ENCODE measurements at regions of chr5 and their contacts with region 1.

Region 1: GRCh38 chr5:125412561-125413495 is 666.4 kb upstream of the ZNF608 start:
- DNase-seq: peak; percentile 58 to 74
- ATAC-seq: peak; percentile 91 to 96 (median 94)
- H3K4me3 ChIP-seq: peak overlapping the region; percentile 42
- H3K27ac ChIP-seq: peak overlapping the region; percentile 43
- H3K4me1 ChIP-seq: peaks cover 24% of the 10 kb centered on the region
- H3K27me3 ChIP-seq: no peaks in the 10 kb centered on the region
- CTCF ChIP-seq: peak; percentile 44

Region 2: DNA sequence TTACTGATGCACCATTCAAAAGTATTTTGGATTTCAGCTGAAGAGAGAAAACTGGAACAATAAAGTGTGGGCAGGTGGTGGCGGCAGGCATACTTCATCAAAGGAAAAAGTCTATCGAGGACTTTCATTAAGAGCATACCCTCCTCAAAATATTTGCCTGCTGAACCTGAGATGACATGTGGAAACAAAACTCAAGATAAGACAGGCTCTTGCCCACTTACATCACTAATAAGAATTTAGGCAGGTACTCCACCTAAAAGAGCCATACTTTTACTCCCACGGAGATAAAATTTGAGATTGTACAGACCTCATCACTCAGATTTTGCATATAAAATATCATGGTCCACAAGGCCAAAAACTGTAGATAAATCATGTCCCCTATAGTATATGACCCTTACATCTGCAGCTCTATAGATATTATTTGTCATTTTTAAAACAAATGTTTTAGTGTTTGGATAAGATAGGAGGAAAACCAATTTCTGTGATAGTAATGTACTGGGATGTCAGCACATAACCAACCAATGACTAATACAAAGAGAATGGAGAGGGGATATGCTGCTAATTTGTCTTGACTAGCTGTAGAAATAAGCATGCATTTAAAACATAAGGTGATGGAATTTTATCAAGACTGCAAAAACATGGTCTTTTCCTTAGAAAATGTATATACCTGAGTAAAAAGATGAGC is 64.2 kb after region 1 on chr5:
- intact Hi-C with region 1: loop called in 1 of 2 experiments (anchors 5 kb)
- DNase-seq: no peak
- ATAC-seq: no peak
- H3K4me3 ChIP-seq: no peak overlapping the region
- H3K27ac ChIP-seq: no peak overlapping the region
- H3K4me1 ChIP-seq: no peaks in the 10 kb centered on the region
- H3K27me3 ChIP-seq: no peaks in the 10 kb centered on the region
- CTCF ChIP-seq: no peak

Region 3: DNA sequence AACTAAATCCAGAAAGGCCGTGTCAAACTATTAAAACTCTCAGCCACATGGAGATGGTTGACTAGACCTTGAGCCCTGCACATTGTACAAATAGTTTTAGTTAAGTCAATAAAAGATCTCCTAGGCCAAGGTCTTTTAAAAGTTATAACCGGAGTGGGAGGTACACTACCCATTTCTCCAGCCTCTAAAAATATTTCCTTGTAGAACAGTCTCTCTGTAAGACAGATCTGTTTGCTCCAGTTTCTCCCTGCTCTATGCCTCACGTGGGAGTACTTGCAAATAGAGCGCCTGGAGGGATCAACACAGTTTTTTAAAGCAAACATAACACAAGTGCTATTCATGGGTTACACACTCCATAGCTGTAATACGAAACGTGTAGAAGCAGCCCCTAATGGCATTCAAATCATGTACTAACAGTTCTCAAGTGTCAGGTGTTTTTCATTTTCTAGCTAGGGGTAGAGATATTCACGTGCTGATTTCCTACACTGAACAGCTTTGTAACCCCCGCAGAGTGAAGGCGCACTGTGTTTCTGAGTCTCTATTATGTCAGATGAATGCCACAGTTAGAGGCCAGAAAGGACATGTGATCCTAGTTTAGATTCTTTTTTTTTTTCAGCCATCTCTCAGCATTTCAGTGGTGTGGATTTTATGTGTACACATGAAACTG is 307.0 kb after region 1 on chr5:
- intact Hi-C with region 1: no loop called
- DNase-seq: no peak
- ATAC-seq: peak in 3 of 4 donors; percentile 68 to 90 (median 85)
- H3K4me3 ChIP-seq: peak overlapping the region; percentile 16
- H3K27ac ChIP-seq: peak overlapping the region; percentile 56
- H3K4me1 ChIP-seq: peaks cover 4% of the 10 kb centered on the region
- H3K27me3 ChIP-seq: no peaks in the 10 kb centered on the region
- CTCF ChIP-seq: no peak

Region 4: GRCh38 chr5:126044111-126044668 is 631.4 kb after region 1 on chr5:
- intact Hi-C with region 1: no loop called
- DNase-seq: no peak
- ATAC-seq: no peak
- H3K4me3 ChIP-seq: no peak overlapping the region
- H3K27ac ChIP-seq: no peak overlapping the region
- H3K4me1 ChIP-seq: no peaks in the 10 kb centered on the region
- H3K27me3 ChIP-seq: no peaks in the 10 kb centered on the region
- CTCF ChIP-seq: no peak

Measured in psoas muscle (tissue), 8 donors.